IMR-90 (cell line): ENCODE measurements at regions of chr9 and their contacts with region 1.

Region 1: DNA sequence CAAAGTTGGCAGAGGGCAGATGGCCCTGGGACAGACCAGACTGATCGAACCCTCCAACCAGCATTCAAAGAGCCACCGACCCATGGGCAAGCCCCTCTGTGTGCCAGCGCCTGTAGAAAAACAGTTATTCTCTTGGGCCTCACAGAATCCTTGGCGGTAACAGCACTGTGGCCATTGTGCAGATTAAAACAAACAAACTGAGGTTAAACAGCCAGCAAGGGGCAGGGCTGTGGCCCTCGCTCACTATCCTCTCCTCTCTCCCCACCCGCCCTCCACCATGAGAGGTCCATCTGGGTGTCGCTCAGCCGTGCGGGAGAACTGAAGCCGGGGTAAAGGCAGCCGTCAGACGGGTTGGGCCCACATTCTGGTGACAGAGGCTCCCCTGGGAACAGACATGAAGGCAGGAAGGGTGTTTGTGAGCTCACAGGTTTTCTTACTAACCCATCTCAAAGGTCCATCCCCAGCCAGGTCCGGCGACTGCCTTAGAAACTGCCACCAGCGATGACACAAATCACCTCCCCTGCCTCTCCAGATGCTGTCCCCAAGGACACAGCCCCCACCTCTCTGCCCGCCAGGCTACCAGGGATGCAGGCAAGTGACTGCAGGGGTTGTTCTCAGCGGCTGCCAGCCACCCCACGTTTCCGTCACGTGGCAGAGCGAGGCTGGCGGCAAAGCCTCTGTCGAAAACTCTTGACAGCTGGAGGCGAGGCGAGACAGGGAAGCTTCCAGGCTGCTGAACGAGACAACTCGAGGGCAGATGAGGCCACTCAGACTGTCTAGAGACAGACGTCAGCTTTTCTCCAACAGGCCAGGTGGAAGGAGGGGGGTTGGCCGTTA is 75.8 kb upstream of the SARDH start:
- DNase-seq: peak; percentile 26
- ATAC-seq: no peak
- H3K4me3 ChIP-seq: no peak overlapping the region
- H3K27ac ChIP-seq: no peak overlapping the region
- H3K4me1 ChIP-seq: no peaks in the 10 kb centered on the region; the same call in 1 of the 2 replicates
- H3K27me3 ChIP-seq: no peaks in the 10 kb centered on the region
- CTCF ChIP-seq: no peak
- POLR2A ChIP-seq: no peak
- RAD21 ChIP-seq: no peak

Region 2: DNA sequence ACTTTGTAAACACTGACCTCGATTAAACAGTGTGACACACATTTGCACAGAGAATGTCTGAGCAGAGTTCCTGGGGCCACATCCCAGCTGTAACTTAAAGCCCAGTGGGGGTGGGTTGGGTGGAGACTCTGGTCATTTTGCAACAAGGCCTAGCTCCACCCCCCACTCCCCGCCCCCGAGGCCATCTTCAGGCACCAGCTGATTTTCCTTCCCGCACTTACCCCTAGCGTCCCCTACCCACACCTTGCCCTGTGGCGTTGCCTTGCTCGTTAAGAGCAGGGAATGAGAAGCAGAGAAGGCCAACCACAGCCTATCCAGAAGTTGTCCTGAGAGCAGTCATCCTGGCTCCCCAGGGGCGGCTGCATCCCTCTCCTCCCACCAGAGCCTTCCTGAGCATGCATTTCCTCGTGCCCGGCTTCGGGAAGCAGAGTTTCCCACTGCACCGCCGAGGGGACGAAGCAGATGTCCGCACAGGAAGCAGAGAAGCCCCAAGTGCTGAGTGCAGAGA is 25.9 kb after region 1 on chr9:
- CTCF ChIA-PET with region 1: no interaction called
- POLR2A ChIA-PET with region 1: no interaction called
- dilution Hi-C with region 1: no loop called
- in situ Hi-C with region 1: no loop called
- intact Hi-C with region 1: no loop called
- DNase-seq: peak; percentile 44
- ATAC-seq: peak; percentile 91
- H3K4me3 ChIP-seq: no peak overlapping the region
- H3K27ac ChIP-seq: peak overlapping the region; percentile 33; the same call in 1 of the 2 replicates
- H3K4me1 ChIP-seq: peaks cover 6% of the 10 kb centered on the region
- H3K27me3 ChIP-seq: no peaks in the 10 kb centered on the region
- CTCF ChIP-seq: no peak
- POLR2A ChIP-seq: no peak
- RAD21 ChIP-seq: no peak

Region 3: DNA sequence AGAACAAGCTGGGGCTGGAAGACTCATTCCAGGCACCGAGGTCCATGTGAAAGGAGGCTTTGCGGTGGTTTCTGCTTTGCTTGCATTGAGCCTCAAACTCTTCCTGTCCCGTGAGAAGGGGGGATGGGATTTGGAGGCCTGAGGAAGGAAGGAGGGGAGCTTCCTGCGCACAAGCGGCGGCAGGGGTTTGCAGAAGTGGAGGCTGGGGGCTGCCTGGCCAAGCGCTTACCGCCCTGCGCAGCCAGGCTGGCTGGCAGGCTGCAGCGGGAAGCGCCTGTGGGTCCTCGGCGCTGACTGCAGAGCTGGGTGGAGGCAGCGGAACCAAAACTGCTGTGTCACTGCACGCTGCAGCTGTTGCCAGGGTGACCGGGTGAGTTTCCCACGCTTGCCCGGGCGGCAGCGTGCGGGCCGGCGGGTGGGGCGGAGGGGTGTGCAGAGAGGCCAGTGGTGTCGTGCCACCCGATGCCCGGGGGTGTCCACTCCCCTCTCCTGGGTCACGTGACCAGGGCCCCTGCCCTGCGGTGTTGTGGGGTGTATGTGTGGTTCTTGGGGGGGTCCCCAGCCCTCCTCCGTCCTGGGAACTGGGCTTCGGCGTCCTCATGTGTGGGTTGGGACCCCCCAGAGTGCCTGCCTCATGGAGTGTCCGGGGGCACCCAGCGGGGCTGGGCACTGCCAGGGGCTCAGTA is 593.3 kb after region 1 on chr9:
- CTCF ChIA-PET with region 1: no interaction called
- POLR2A ChIA-PET with region 1: no interaction called
- dilution Hi-C with region 1: no loop called
- in situ Hi-C with region 1: loop called (anchors 25 kb)
- intact Hi-C with region 1: no loop called
- DNase-seq: peak; percentile 90
- ATAC-seq: peak; percentile 86
- H3K4me3 ChIP-seq: 0 out of 2 replicates have a peak overlapping the region, but pooled peaks have one; percentile 12
- H3K27ac ChIP-seq: peak overlapping the region; percentile 90
- H3K4me1 ChIP-seq: peaks cover 30% of the 10 kb centered on the region
- H3K27me3 ChIP-seq: no peaks in the 10 kb centered on the region
- CTCF ChIP-seq: no peak
- POLR2A ChIP-seq: no peak
- RAD21 ChIP-seq: no peak